ENCODE measurements at regions of chr1 and their contacts with region 1.

Region 1: DNA sequence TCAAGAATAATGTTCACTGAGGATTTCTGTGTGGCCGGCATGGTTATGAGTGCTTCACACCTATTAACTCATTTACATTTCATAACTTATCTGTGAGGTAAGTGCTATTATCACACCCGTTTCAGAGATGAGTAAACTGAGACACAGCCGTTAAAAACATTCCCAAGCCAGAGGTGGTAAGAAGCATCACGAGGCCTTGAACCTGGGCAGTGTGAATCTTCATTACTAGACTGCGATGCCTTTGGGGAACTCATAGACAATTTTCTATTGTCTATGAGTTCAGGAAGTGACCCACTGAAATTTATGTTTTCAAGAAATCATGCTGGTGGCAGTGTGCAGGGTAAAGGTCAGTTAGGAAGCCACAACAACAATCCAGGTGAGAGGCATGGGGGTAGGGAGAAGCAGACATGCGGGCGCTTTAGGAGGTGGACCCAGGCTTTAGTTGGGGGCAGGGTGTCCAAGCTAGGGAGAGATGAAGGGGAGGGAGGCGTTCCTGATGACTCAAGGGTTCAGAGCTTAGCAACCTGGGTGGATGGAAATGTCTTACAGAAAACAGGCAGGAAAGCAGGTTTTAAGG is 14.5 kb downstream of the GNG12 start:
- DNase-seq: peak; percentile 68 to 76
- H3K4me3 ChIP-seq: no peak overlapping the region
- H3K27ac ChIP-seq: no peak overlapping the region
- H3K4me1 ChIP-seq: peaks cover 28% of the 10 kb centered on the region
- H3K27me3 ChIP-seq: no peaks in the 10 kb centered on the region
- CTCF ChIP-seq: no peak

Region 2: DNA sequence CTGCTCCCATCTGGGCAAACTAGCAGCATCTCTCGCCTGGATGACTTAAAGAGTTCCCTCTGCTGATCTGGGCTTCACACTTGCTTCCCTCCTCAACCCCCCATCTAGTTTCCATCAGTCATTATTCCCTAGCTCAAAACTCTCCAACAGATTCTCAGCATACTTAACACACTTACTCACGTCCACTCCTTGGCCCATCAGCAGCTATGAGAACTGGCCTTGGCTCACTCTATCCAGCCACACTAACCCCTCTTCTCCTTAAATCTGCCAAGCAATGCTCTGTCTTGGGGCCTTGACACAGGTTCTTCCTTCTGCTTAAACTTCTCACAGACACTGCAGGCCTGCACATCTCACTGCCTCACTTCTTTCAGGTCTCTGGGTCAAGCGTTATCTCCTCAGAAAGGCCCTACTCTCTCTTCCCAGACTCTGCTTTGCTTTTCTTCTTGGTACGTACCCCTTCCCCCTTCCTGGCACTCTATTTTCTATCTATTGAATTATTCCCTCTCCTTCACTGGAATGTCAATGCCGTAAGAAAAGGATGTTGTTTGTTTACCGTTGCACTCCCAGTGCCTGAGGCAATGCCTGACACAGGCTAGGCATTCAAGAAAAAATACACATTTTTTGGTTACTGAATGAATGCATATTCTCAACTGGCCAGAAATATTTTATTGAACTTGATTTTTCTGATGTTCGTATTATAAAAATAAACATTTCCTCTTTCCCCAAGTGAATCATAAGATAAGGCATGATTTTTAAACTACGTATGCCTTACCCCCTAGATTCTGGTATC is 26.9 kb before region 1 on chr1:
- CTCF ChIA-PET with region 1: interaction called, 3 read pairs
- POLR2A ChIA-PET with region 1: interaction called, 14 read pairs
- intact Hi-C with region 1: no loop called
- DNase-seq: peak; percentile 60 to 89
- H3K4me3 ChIP-seq: no peak overlapping the region; the same call in 1 of the 2 replicates
- H3K27ac ChIP-seq: peak overlapping the region; percentile 84
- H3K4me1 ChIP-seq: peaks cover 45% of the 10 kb centered on the region
- H3K27me3 ChIP-seq: no peaks in the 10 kb centered on the region
- CTCF ChIP-seq: no peak

Region 3: GRCh38 chr1:68093737-68094136 is 274.9 kb after region 1 on chr1:
- CTCF ChIA-PET with region 1: no interaction called
- POLR2A ChIA-PET with region 1: no interaction called
- intact Hi-C with region 1: no loop called
- DNase-seq: no peak
- H3K4me3 ChIP-seq: no peak overlapping the region
- H3K27ac ChIP-seq: no peak overlapping the region
- H3K4me1 ChIP-seq: no peaks in the 10 kb centered on the region
- H3K27me3 ChIP-seq: no peaks in the 10 kb centered on the region
- CTCF ChIP-seq: no peak

Region 4: DNA sequence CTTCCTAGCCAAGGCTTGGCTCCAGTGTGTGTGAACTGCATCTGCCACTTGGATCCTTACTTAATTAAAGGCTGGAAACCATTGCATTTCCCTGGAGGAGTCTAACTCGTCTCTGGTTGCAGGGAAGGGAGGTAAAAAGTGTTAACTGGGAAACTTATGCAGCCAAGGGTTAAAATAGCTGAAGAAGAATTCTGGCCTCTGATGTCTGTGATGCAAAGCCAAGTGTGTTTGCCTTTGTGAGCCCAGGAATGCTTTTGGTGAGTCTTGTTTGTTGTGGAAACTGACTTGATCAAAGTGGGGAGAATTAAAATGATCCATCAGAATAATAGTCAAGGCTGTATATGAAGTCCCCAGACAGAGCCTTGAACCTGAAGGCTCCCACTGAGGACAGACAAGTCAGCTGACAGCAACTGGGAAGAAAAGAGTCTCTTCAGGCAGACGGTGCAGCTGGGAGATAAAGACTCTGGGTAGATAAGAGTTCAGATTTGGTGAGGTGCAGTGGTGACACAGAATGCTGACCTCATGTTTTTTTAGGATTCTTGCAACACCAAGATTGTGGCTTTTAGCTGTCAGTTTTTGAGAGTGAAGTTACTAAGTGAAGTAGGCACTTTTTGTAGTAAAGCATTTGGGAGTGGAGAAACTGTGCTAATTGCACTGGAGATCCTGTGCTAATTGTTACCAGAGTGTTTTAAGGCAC is 473.0 kb after region 1 on chr1:
- CTCF ChIA-PET with region 1: no interaction called
- POLR2A ChIA-PET with region 1: no interaction called
- intact Hi-C with region 1: no loop called
- DNase-seq: no peak
- H3K4me3 ChIP-seq: no peak overlapping the region
- H3K27ac ChIP-seq: no peak overlapping the region
- H3K4me1 ChIP-seq: no peaks in the 10 kb centered on the region
- H3K27me3 ChIP-seq: no peaks in the 10 kb centered on the region
- CTCF ChIP-seq: no peak

Region 5: DNA sequence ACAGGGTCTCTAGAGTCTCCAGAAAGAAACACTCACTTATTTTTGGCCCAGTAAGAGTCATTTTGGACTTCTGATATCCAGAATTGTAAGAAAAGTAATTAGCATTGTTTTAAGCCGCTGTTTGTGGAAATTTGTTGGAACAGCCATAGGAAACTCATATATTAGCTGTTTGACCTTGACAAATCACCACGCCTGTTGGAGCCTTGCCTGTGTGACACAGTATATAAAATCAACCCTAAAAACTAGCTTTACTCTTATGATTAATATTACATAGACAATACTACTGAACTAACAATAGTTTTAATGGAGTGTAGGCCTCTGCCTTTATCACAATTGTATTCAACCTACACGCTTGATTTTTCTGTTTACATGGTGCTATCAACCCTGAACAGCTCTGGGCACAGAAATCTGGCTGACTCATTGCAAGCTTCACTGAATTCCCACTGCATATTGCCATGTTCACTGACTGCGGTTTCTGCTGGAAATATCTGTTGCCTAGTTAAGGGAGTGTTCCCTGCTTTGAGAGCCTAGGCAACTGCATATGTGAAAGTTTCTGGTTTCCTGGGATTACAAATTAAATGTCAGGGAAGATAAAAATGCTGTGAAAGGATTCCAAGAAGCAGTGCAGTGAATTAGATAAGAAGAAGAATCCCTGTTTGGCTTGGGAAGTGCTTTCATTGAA is 1097.5 kb after region 1 on chr1:
- CTCF ChIA-PET with region 1: no interaction called
- POLR2A ChIA-PET with region 1: interaction called, 21 read pairs
- intact Hi-C with region 1: no loop called
- DNase-seq: peak; percentile 27 to 47
- H3K4me3 ChIP-seq: no peak overlapping the region
- H3K27ac ChIP-seq: no peak overlapping the region
- H3K4me1 ChIP-seq: no peaks in the 10 kb centered on the region
- H3K27me3 ChIP-seq: no peaks in the 10 kb centered on the region
- CTCF ChIP-seq: no peak

Measured in PC-9 (cell line).